A549 (cell line): ENCODE measurements at regions of chr10 and their contacts with region 1.

Region 1: DNA sequence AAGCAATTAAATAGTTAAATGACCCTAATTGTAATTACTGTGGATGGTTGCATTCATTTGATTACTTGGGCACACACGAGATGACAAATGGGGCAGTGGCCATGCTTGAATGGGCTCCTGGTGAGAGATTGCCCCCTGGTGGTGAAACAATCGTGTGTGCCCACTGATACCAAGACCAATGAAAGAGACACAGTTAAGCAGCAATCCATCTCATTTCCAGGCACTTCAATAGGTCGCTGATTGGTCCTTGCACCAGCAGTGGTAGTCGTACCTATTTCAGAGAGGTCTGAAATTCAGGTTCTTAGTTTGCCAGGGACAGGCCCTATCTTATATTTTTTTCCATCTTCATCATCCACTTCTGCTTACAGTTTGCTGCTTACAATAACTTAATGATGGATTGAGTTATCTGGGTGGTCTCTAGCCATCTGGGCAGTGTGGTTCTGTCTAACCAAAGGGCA is 8.3 kb downstream of the PCBD1 start:
- DNase-seq: peak; percentile 72 to 80
- ATAC-seq: peak; percentile 86 to 95
- H3K4me3 ChIP-seq: no peak overlapping the region
- H3K27ac ChIP-seq: no peak overlapping the region
- H3K4me1 ChIP-seq: no peaks in the 10 kb centered on the region
- CTCF ChIP-seq: peak; percentile 92
- EP300 ChIP-seq: no peak
- POLR2A ChIP-seq: no peak
- RAD21 ChIP-seq: peak; percentile 83 to 85

Region 2: DNA sequence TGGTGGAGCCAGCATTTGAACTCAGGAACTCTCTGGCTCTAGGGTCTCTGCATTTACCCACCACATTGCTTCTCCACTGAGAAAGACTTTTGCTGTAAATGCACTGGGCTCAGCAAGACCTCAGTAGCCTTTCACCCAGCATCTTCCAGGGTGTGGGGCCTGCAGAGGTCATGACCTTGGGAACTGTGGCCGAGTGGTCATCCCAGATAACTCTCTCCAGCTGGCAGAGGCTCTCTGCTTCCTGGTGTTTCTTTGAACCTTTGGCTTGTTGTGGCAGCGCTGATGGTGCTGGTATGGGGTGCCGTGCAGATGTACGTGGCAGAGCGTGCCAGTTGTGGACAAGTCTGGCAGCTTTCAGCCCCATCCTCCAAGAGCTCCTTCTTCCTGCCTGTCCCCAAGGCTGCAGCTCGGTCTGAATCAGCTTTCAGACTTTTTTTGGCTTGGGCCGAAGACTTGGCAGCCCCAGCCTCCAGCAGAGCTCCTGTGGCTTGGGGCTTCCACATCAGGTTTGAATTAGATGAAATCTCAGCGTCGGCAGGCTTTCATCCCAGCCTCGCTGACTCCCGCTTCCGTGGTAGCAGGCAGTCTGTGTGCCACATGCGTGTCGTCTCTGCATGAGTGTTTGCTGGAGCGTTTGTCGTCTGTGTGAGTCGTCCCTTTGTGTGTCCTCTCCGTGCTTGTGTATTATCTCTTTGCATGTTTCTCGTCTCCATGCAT is 186.3 kb before region 1 on chr10:
- CTCF ChIA-PET with region 1: no interaction called
- POLR2A ChIA-PET with region 1: no interaction called
- DNase-seq: no peak
- ATAC-seq: no peak
- H3K4me3 ChIP-seq: no peak overlapping the region
- H3K27ac ChIP-seq: no peak overlapping the region
- H3K4me1 ChIP-seq: no peaks in the 10 kb centered on the region
- CTCF ChIP-seq: no peak
- EP300 ChIP-seq: no peak
- POLR2A ChIP-seq: no peak
- RAD21 ChIP-seq: no peak

Region 3: GRCh38 chr10:70863470-70864160 is 16.5 kb before region 1 on chr10:
- CTCF ChIA-PET with region 1: interaction called, 10 read pairs
- POLR2A ChIA-PET with region 1: no interaction called
- DNase-seq: no peak
- ATAC-seq: 0 out of 6 replicates have a peak, but pooled peaks of 1 of the 2 experiments have one; percentile 30
- H3K4me3 ChIP-seq: no peak overlapping the region
- H3K27ac ChIP-seq: no peak overlapping the region
- H3K4me1 ChIP-seq: peaks cover 4% of the 10 kb centered on the region; the same call in 2 of the 3 replicates
- CTCF ChIP-seq: no peak
- EP300 ChIP-seq: no peak
- POLR2A ChIP-seq: no peak
- RAD21 ChIP-seq: no peak

Region 4: GRCh38 chr10:70913191-70913892 is 33.2 kb after region 1 on chr10:
- CTCF ChIA-PET with region 1: no interaction called
- POLR2A ChIA-PET with region 1: no interaction called
- DNase-seq: no peak
- ATAC-seq: no peak
- H3K4me3 ChIP-seq: no peak overlapping the region
- H3K27ac ChIP-seq: no peak overlapping the region
- H3K4me1 ChIP-seq: no peaks in the 10 kb centered on the region
- CTCF ChIP-seq: no peak
- EP300 ChIP-seq: no peak
- POLR2A ChIP-seq: no peak
- RAD21 ChIP-seq: no peak

Region 5: GRCh38 chr10:70974351-70974901 is 94.3 kb after region 1 on chr10:
- CTCF ChIA-PET with region 1: no interaction called
- POLR2A ChIA-PET with region 1: no interaction called
- DNase-seq: peak in 1 of 2 experiments; percentile 49
- ATAC-seq: peak; percentile 56 to 63; a peak in 3 of 6 replicates
- H3K4me3 ChIP-seq: no peak overlapping the region
- H3K27ac ChIP-seq: 0 out of 6 replicates have a peak overlapping the region, but pooled peaks of 1 of the 2 experiments have one; percentile 3
- H3K4me1 ChIP-seq: peaks cover 7% of the 10 kb centered on the region; the same call in 1 of the 3 replicates
- CTCF ChIP-seq: no peak
- EP300 ChIP-seq: no peak
- POLR2A ChIP-seq: no peak
- RAD21 ChIP-seq: no peak